ENCODE measurements at regions of chr10 and their contacts with region 1.

Region 1: GRCh38 chr10:42419789-42420188 is 218.6 kb downstream of the ZNF33B start:
- DNase-seq: no peak
- ATAC-seq: no peak
- H3K4me3 ChIP-seq: no peak overlapping the region
- H3K27ac ChIP-seq: no peak overlapping the region
- H3K4me1 ChIP-seq: no peaks in the 10 kb centered on the region
- H3K27me3 ChIP-seq: no peaks in the 10 kb centered on the region
- CTCF ChIP-seq: no peak
- POLR2A ChIP-seq: no peak
- RAD21 ChIP-seq: no peak

Region 2: DNA sequence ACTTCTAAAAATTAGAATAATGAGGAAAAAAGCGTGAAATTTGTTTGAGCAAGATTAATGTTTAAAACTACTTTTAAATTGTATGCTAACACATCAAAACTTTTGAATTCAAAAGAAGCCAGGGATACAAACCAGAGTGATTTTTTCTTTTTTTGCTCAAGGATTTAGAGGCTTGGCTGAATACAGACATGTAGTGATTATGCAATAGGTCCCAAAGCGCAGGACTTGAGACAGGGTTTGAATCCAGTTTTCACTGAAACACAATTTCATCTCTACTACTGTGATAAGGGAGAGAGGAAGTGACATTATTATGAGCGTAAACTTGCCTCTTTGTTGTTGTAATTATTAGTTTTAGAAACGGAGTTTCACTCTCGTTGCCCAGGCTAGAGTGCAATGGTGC is 11.3 kb after region 1 on chr10:
- CTCF ChIA-PET with region 1: no interaction called
- POLR2A ChIA-PET with region 1: no interaction called
- RAD21 ChIA-PET with region 1: no interaction called
- intact Hi-C with region 1: loop called (anchors 2 kb)
- DNase-seq: no peak
- ATAC-seq: no peak
- H3K4me3 ChIP-seq: no peak overlapping the region
- H3K27ac ChIP-seq: no peak overlapping the region
- H3K4me1 ChIP-seq: no peaks in the 10 kb centered on the region
- H3K27me3 ChIP-seq: no peaks in the 10 kb centered on the region
- CTCF ChIP-seq: no peak
- POLR2A ChIP-seq: no peak
- RAD21 ChIP-seq: no peak

Measured in HCT116 (cell line).